ENCODE measurements at regions of chr19 and their contacts with region 1.

Region 1: GRCh38 chr19:10644260-10645007 is 9.7 kb upstream of the ILF3 start:
- DNase-seq: peak; percentile 43
- H3K4me3 ChIP-seq: no peak overlapping the region
- CTCF ChIP-seq: peak; percentile 89

Region 2: DNA sequence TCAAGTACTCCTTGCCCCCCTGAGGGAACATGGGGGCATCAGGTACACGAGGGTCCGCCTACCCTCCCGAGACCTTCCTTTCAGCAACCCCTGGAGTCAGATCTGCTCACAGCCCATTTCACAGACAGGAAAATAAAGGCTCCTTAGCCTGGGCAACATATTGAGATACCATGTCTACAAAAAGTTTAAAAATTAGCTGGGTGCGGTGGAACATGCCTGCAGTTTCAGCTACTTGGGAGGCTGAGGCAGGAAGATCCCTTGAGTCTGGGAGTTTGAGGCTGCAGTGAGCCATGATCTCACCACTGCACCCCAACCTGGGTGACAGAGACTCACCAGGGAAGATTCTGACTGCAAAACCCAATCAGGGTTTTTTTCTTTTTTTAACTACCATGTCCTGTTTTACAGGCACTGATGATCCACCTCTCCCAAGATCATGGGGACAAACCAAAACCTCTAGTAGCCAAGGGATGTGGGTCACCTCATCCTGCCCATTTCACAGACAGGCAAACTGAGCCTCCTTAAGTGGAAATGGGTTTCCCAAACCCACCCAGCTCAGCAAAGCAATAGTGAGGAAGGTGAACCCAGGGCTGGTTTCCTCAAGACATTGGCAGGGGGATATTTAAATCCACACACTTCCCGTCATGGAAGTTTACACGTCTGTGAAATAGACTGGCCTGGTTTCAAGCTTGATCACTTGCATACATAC is 69.3 kb before region 1 on chr19:
- in situ Hi-C with region 1: loop called (anchors 5 kb)
- DNase-seq: no peak
- H3K4me3 ChIP-seq: no peak overlapping the region
- CTCF ChIP-seq: no peak

Region 3: GRCh38 chr19:10695401-10696398 is 51.3 kb after region 1 on chr19:
- in situ Hi-C with region 1: no loop called
- DNase-seq: peak; percentile 80
- H3K4me3 ChIP-seq: peak overlapping the region; percentile 21
- CTCF ChIP-seq: no peak

Measured in astrocyte of the cerebellum (primary cell).